ENCODE measurements at regions of chr11 and their contacts with region 1.

Region 1: GRCh38 chr11:848380-848931 is 5.8 kb downstream of the TSPAN4 start:
- DNase-seq: peak; percentile 70
- H3K4me3 Mint-ChIP-seq: peak overlapping the region; percentile 41
- H3K27ac Mint-ChIP-seq: no peak overlapping the region
- H3K4me1 Mint-ChIP-seq: peaks cover 16% of the 10 kb centered on the region
- H3K27me3 Mint-ChIP-seq: peaks cover under 1% of the 10 kb centered on the region

Region 2: DNA sequence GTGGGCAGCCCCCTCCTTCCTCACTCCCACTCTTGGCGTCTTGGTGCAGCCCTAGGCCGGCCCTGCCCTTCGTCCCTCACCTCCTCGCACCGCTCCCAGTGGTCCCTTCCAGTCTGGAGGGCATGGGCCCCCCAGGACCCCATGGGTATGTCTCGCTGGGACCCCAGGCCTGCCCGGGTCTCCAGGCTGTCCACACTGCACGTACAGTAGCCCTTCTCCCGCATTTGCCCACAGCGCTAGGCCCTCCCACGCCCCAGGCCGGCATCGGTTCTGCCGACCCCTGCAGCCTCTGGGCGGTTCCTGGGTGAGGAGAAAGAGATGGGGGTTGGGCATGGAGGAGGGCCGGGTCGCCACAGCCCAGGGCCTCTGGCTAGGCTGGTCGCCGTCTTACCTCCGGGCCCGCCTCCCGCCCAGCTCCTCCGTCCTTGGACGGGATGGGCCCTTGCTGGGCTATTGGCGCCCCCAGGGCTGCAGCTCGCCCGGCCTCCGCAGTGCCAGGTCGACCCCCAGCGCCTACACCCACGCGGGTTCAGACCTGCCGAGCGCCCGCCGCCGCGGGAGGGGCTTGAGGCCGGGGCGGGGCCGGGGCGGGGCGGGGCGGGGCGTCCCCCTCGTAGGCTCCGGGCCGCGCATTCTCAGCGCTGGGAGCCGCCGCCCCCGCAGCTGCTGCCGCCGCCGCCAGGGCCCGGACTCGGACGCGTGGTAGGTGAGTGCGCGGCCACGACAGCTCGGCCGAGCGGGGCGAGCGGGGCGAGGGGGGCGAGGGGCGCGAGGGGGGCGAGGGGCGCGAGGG is 15.9 kb before region 1 on chr11 and contains the start of gene CD151:
- CTCF ChIA-PET with region 1: interaction called, 19 read pairs
- POLR2A ChIA-PET with region 1: no interaction called
- DNase-seq: peak; percentile 51
- H3K4me3 Mint-ChIP-seq: peak within 1 kb of the TSS; percentile 67
- H3K27ac Mint-ChIP-seq: no peak within 1 kb of the TSS
- H3K4me1 Mint-ChIP-seq: peaks cover 39% of the 10 kb centered on the region
- H3K27me3 Mint-ChIP-seq: peaks cover 44% of the 10 kb centered on the region
- total RNA-seq, gene CD151: 35.4 to 37.6 TPM